Activated CD8-positive, alpha-beta T cell treated with anti-CD3 and anti-CD28 coated beads for 36 hours (primary cell): ENCODE measurements at regions of chr7 and their contacts with region 1.

Region 1: DNA sequence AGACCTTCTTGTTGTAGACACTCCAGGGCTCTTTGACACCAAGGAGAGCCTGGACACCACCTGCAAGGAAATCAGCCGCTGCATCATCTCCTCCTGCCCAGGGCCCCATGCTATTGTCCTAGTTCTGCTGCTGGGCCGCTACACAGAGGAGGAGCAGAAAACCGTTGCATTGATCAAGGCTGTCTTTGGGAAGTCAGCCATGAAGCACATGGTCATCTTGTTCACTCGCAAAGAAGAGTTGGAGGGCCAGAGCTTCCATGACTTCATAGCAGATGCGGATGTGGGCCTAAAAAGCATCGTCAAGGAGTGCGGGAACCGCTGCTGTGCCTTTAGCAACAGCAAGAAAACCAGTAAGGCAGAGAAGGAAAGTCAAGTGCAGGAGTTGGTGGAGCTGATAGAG is 5.5 kb downstream of the GIMAP7 start:
- DNase-seq: peak; percentile 66
- ATAC-seq: peak; percentile 42
- H3K4me3 Mint-ChIP-seq: peak overlapping the region; percentile 98
- H3K27ac Mint-ChIP-seq: peak overlapping the region; percentile 97
- H3K4me1 Mint-ChIP-seq: peaks cover 37% of the 10 kb centered on the region
- H3K27me3 Mint-ChIP-seq: no peaks in the 10 kb centered on the region
- CTCF ChIP-seq: no peak

Region 2: DNA sequence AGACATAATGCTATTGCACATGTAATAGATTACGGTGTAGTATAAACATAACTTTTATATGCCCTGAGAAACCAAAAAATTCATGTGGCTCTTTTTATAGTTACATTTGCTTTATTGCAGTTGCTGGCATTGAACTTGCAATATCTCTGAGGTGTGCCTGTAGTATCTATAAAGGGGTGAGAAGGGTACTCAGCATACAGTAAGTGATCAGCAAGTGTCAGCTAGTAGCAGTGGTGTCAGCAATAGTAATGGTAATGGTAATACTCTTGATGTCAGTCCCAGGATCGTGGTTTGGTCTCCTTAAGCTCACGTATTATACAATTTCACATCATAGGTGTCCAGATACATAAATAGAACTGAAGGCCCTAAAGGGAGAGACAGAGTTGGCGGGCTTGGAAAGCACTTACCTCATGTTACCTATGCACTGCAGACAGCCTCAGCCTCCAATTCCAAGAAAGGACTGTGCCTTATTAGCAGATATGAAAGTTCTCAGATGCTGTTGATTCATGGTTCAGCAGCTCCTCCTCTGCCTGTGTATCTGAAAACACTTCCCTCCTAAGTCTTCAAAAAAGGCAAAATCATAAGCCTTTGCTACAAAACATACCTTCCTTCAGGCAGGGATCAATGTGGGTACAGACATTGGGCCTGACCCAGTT is 12.1 kb before region 1 on chr7:
- CTCF ChIA-PET with region 1: interaction called, 14 read pairs
- POLR2A ChIA-PET with region 1: interaction called, 36 read pairs
- intact Hi-C with region 1: no loop called
- DNase-seq: peak; percentile 58
- ATAC-seq: peak; percentile 67
- H3K4me3 Mint-ChIP-seq: peak overlapping the region; percentile 40
- H3K27ac Mint-ChIP-seq: peak overlapping the region; percentile 83
- H3K4me1 Mint-ChIP-seq: peaks cover 87% of the 10 kb centered on the region
- H3K27me3 Mint-ChIP-seq: no peaks in the 10 kb centered on the region
- CTCF ChIP-seq: no peak

Region 3: GRCh38 chr7:150610233-150610632 is 90.1 kb after region 1 on chr7:
- CTCF ChIA-PET with region 1: no interaction called
- POLR2A ChIA-PET with region 1: no interaction called
- intact Hi-C with region 1: no loop called
- DNase-seq: no peak
- ATAC-seq: peak; percentile 69
- H3K4me3 Mint-ChIP-seq: no peak overlapping the region
- H3K27ac Mint-ChIP-seq: peak overlapping the region; percentile 87
- H3K4me1 Mint-ChIP-seq: peaks cover 66% of the 10 kb centered on the region
- H3K27me3 Mint-ChIP-seq: no peaks in the 10 kb centered on the region
- CTCF ChIP-seq: no peak

Region 4: GRCh38 chr7:150778738-150779301 is 258.7 kb after region 1 on chr7:
- CTCF ChIA-PET with region 1: no interaction called
- POLR2A ChIA-PET with region 1: no interaction called
- intact Hi-C with region 1: no loop called
- DNase-seq: peak; percentile 85
- ATAC-seq: peak; percentile 66
- H3K4me3 Mint-ChIP-seq: no peak overlapping the region
- H3K27ac Mint-ChIP-seq: no peak overlapping the region
- H3K4me1 Mint-ChIP-seq: no peaks in the 10 kb centered on the region
- H3K27me3 Mint-ChIP-seq: peaks cover 3% of the 10 kb centered on the region
- CTCF ChIP-seq: peak; percentile 94